ENCODE measurements at regions of chr15 and their contacts with region 1.

Region 1: DNA sequence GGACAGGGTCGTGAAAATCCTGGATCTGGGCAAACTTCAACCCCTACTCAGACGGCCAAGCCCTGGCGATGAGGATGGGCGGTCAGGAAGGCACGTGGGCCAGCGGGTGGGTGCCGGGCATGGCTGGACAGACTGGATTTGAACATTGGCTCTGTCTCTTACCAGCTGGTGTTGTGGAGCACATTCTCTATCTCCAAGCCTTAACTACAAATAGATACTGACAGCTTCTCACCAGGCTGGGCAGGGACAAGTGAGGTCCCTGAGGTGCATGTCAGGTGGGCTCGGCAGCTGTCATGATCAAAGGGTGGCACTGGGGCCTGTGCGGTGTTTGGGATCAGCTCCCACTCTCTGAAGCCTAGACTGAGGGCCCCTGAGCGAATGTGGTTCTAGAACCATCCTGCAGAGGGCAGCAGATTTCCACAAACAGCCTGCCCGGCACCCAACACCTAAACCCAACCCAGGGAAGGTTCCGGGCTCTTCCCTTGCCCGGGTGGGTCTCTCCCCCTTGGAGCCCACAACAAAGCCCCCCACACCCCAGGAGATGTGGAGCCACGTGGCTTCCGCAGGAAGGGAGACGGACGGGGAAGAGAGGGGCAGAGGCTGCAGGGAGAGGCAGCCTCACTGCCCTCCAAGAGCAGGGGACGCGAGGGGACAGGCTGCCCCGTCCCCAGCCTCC is 58.4 kb downstream of the RGMA start:
- DNase-seq: peak; percentile 79
- ATAC-seq: peak; percentile 87
- H3K4me3 Mint-ChIP-seq: no peak overlapping the region
- H3K27ac Mint-ChIP-seq: peak overlapping the region; percentile 16
- H3K4me1 Mint-ChIP-seq: peaks cover 37% of the 10 kb centered on the region
- H3K27me3 Mint-ChIP-seq: no peaks in the 10 kb centered on the region

Region 2: DNA sequence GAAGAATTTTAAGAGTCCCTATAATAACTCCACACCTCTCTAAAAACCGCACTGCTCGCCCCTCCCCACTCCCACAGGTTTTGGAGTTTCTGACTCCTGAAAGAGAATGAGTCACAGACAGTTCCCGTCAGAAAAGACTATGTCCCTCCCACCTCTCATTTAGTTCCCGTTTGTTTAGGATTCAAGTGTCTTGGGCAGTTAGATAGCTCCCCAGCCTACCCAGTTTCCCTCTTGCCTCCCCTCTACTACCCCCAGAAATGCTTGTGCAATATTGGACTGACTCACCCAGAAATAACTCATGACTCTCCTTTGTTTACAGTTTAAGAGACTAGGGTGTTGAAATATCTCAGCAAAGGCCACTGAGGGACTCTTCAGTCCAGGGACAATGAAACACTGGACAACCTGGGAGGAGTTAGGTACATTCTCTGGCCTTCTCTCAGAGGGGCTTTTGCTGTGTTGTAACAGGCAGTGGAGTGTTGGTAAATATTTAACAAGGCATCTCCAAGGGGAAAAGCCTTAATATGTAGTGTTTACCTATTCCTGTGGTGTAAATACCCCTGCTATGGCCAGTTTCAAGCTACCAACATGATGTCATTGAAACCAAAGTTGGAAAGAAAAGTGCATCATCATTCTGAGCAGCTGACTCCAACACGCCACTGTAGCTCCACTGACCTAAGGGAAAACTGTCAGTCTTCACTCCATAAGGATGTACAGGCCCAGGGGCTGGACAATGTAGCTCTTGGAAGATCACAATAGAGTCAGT is 226.5 kb before region 1 on chr15:
- CTCF ChIA-PET with region 1: interaction called, 5 read pairs
- POLR2A ChIA-PET with region 1: interaction called, 3 read pairs
- intact Hi-C with region 1: loop called in 1 of 2 experiments (anchors 5 kb)
- DNase-seq: peak; percentile 91
- ATAC-seq: peak; percentile 86
- H3K4me3 Mint-ChIP-seq: peak overlapping the region; percentile 17
- H3K27ac Mint-ChIP-seq: peak overlapping the region; percentile 94
- H3K4me1 Mint-ChIP-seq: peaks cover 36% of the 10 kb centered on the region
- H3K27me3 Mint-ChIP-seq: no peaks in the 10 kb centered on the region

Region 3: GRCh38 chr15:92817339-92817886 is 213.2 kb before region 1 on chr15:
- CTCF ChIA-PET with region 1: no interaction called
- POLR2A ChIA-PET with region 1: no interaction called
- intact Hi-C with region 1: no loop called
- DNase-seq: no peak
- ATAC-seq: no peak
- H3K4me3 Mint-ChIP-seq: peak overlapping the region; percentile 82
- H3K27ac Mint-ChIP-seq: peak overlapping the region; percentile 77
- H3K4me1 Mint-ChIP-seq: peaks cover 70% of the 10 kb centered on the region
- H3K27me3 Mint-ChIP-seq: no peaks in the 10 kb centered on the region

Region 4: GRCh38 chr15:93060336-93061263 is 30.0 kb after region 1 on chr15:
- CTCF ChIA-PET with region 1: interaction called, 14 read pairs
- POLR2A ChIA-PET with region 1: no interaction called
- intact Hi-C with region 1: no loop called
- DNase-seq: no peak
- ATAC-seq: no peak
- H3K4me3 Mint-ChIP-seq: no peak overlapping the region
- H3K27ac Mint-ChIP-seq: no peak overlapping the region
- H3K4me1 Mint-ChIP-seq: peaks cover 3% of the 10 kb centered on the region
- H3K27me3 Mint-ChIP-seq: peaks cover 12% of the 10 kb centered on the region

Region 5: GRCh38 chr15:93587059-93587521 is 556.5 kb after region 1 on chr15:
- CTCF ChIA-PET with region 1: no interaction called
- POLR2A ChIA-PET with region 1: no interaction called
- intact Hi-C with region 1: no loop called
- DNase-seq: no peak
- ATAC-seq: no peak
- H3K4me3 Mint-ChIP-seq: no peak overlapping the region
- H3K27ac Mint-ChIP-seq: no peak overlapping the region
- H3K4me1 Mint-ChIP-seq: no peaks in the 10 kb centered on the region
- H3K27me3 Mint-ChIP-seq: peaks cover 12% of the 10 kb centered on the region

Region 6: GRCh38 chr15:93997084-93997918 is 966.7 kb after region 1 on chr15:
- CTCF ChIA-PET with region 1: interaction called, 3 read pairs
- POLR2A ChIA-PET with region 1: no interaction called
- intact Hi-C with region 1: loop called in 1 of 2 experiments (anchors 10 kb)
- DNase-seq: no peak
- ATAC-seq: no peak
- H3K4me3 Mint-ChIP-seq: no peak overlapping the region
- H3K27ac Mint-ChIP-seq: no peak overlapping the region
- H3K4me1 Mint-ChIP-seq: no peaks in the 10 kb centered on the region
- H3K27me3 Mint-ChIP-seq: no peaks in the 10 kb centered on the region

Measured in activated CD4-positive, alpha-beta T cell treated with anti-CD3 and anti-CD28 coated beads for 36 hours (primary cell).